ENCODE measurements at regions of chr7 and their contacts with region 1.

Region 1: GRCh38 chr7:90595801-90596671 is at the start of gene CDK14:
- DNase-seq: peak; percentile 91 to 95
- ATAC-seq: peak; percentile 85
- H3K4me3 ChIP-seq: peak within 1 kb of the TSS; percentile 60 to 91
- H3K27ac ChIP-seq: peak within 1 kb of the TSS; percentile 9 to 78
- H3K4me1 ChIP-seq: peaks cover 2 to 4% of the 10 kb centered on the region in 2 donors
- H3K27me3 ChIP-seq: no peaks in the 10 kb centered on the region
- total RNA-seq, gene CDK14: 53.6 to 72.4 TPM

Region 2: DNA sequence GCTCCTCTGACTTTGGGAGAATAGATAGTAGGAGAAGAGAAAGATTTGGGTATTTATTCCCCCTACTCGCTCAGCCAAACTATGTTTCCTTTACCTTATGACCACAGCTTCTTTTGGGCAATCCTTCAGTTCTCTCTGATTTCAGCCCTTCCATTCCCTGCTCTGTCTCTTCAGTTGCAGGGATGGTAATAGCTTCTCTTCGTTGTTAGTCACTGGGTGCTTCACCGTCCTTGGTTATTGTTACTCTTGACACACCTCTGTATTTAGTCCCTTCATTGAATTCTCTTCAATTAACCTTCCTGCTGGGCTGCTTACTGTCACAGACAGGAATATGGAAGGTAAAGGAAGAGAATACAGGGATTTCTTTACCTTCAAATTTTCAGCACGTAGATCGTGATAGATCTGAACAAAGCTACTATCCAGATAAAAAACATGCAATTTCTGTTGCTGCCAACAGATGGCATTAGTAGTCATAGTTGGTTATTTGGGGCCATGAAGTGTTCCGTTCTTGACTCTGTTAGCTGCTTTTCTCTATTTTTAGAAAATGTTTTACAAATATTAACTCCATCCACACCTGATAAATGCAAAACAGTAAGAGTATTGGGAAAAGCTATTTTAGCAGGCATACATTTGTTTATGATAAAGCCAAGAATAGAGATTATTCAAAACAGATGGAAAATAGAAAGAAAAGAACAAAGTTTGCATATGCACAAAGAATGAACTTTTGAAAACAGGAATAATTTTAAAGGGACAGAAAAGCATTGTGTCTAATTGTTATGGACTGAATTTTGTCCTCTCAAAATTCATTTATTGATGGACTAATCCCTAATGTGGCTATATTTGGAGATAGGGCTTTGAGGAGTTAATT is 140.6 kb before region 1 on chr7:
- intact Hi-C with region 1: loop called in 1 of 2 experiments (anchors 10 kb)
- DNase-seq: no peak
- ATAC-seq: peak; percentile 84
- H3K4me3 ChIP-seq: peak overlapping the region in 1 of 2 donors; percentile 18
- H3K27ac ChIP-seq: no peak overlapping the region
- H3K4me1 ChIP-seq: no peaks in the 10 kb centered on the region
- H3K27me3 ChIP-seq: no peaks in the 10 kb centered on the region

Region 3: DNA sequence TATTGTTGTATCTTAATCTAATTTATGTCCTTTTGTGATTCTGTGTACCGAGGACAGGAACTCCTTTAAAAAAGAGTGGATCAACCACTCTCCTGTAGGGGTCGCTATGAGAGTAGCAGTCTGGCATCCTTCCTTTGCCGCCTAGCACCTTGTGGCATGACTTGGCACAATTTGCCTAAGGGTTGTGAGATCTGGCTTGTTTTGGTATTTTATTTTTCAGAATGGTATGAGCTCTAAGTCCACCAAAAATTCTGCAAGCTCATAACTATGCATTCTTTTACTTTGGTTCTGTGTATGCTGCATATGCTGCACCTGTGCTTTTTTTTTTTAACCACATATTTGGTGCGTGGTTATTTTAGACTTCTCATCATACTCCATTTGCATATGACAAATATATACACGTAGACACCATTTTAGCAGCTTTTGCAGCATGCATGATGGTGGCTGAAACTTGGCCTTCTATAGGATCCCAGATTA is 112.8 kb after region 1 on chr7:
- intact Hi-C with region 1: loop called in 1 of 2 experiments (anchors 10 kb)
- DNase-seq: no peak
- ATAC-seq: no peak
- H3K4me3 ChIP-seq: no peak overlapping the region
- H3K27ac ChIP-seq: no peak overlapping the region
- H3K4me1 ChIP-seq: peaks cover 0 to 14% of the 10 kb centered on the region in 2 donors
- H3K27me3 ChIP-seq: no peaks in the 10 kb centered on the region

Measured in aorta (tissue), 5 donors.